ENCODE measurements at regions of chr11 and their contacts with region 1.

Region 1: DNA sequence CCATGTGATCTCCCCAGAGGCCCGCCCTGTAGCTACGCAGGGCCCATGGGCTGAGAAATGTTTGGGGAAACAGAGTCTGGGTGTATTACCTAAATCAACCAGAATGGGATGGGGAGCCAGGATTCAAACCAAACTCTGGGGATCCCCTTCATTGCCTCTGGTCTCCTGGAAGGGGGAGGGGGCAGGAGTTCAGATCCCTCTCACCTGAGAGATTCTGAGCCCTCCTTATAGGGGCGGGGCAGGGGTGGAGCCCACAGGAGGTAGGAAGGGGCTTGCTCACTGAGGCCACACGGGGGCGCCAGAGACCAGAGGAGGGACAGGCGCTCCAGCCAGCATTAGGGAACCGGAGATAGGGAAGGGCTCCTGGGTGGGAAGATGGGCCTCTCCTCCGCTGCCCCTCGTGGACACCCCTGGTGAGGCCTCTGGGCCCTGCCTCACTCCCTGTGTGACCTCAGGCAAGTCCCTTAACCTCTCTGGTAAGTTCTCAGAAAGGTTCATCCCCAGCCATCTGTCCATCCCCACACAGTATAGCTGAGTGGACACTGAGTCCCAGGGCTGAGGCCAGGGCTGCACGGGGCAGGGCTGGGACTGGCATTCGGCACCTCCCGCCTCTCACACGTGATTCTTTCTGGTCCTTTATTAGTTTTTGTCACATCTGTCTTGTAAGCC is 2.7 kb upstream of the CDC42BPG start:
- DNase-seq: peak; percentile 82 to 98
- H3K4me3 ChIP-seq: no peak overlapping the region
- H3K4me1 ChIP-seq: peaks cover 15% of the 10 kb centered on the region
- H3K27me3 ChIP-seq: no peaks in the 10 kb centered on the region

Region 2: GRCh38 chr11:63745304-63746170 is 1101.6 kb before region 1 on chr11:
- in situ Hi-C with region 1: no loop called
- DNase-seq: peak in 1 of 2 experiments; percentile 26
- H3K4me3 ChIP-seq: no peak overlapping the region
- H3K4me1 ChIP-seq: peaks cover 3% of the 10 kb centered on the region; the same call in 1 of the 2 replicates
- H3K27me3 ChIP-seq: no peaks in the 10 kb centered on the region

Region 3: GRCh38 chr11:64553551-64554201 is 293.5 kb before region 1 on chr11:
- in situ Hi-C with region 1: no loop called
- DNase-seq: peak; percentile 59 to 83
- H3K4me3 ChIP-seq: no peak overlapping the region
- H3K4me1 ChIP-seq: peaks cover 11% of the 10 kb centered on the region
- H3K27me3 ChIP-seq: no peaks in the 10 kb centered on the region; the same call in none of the 2 replicates

Region 4: DNA sequence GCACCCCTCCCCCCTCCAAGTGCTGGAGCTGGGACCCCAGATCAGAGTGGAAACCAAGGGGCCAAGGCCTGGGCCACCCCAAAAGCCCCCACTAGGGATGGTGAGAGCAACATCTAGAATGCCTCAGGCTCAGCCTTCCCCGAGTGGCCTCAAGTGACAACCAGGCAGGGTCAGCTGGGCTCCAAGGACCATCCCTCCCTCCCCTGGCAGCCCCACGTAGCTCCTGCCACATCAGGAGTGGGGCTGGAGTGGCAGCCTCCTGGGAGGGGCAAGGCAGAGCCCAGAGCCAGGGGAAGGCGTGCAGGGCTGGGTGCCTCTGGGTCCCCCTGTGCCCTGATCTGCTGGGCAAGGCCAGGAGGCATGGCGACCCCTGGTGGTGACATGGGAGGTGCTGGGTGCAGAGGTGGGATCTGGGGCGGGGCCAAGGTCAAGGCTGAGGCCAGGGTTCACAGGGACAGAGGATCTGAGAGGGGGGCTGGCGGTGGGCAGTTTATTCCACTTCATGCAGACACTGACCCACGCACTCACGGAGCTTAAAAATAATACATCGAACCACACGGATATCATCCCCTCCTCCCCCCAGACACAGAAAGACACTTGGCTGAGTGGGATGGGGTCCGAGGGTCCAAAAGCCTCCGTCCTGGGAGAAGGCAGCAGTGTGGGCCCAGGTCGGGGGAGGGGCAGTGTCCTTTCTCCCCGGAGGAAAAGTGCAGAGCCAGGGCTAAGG is 47.1 kb after region 1 on chr11:
- in situ Hi-C with region 1: loop called (anchors 5 kb)
- DNase-seq: peak; percentile 37 to 96
- H3K4me3 ChIP-seq: no peak overlapping the region
- H3K4me1 ChIP-seq: no peaks in the 10 kb centered on the region
- H3K27me3 ChIP-seq: no peaks in the 10 kb centered on the region

Region 5: GRCh38 chr11:65117216-65118096 is 270.3 kb after region 1 on chr11 and contains the start of gene ZNHIT2:
- in situ Hi-C with region 1: loop called (anchors 10 kb)
- DNase-seq: peak; percentile 96 to 100
- H3K4me3 ChIP-seq: peak within 1 kb of the TSS; percentile 88
- H3K4me1 ChIP-seq: peaks cover 28% of the 10 kb centered on the region
- H3K27me3 ChIP-seq: no peaks in the 10 kb centered on the region

Measured in HAP-1 (cell line).